Natural killer cell (primary cell): ENCODE measurements at regions of chr5 and their contacts with region 1.

Region 1: DNA sequence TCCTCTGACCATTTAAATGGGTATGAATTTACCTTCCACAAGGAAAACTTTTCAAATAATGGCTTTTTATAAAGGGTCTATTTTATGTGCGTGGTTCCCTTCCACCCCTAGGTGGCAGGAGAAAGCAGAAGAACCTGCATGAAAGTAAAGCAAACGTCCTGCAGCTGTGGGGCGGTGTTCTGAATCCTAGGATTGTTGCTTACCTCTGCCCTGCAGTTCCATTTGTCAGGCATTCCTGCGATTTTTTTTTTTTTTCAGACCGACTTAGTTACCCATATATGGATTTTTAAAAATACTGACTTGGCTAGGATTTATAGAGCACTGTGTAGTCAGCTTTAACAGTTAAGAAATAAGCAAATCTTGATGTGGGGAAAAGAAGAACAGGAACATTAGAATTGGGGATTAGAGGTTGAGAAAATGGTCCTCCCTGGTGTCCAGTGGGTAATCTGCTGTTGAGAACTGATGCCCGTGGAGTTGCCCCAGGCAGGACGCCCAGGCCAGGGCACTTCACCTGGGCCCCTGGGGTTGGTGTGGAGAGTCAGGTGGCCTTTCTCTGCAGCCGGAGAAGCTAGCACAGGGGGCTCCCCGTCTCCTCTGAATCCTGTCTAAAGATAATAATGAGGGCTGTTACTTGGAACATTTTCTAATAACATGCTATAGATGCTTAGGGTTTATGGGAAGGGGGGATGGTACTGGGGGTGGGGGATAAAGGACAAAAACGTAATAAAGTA is 30.4 kb upstream of the LTC4S start:
- DNase-seq: peak; percentile 24 to 80
- ATAC-seq: peak; percentile 72 to 92 (median 84)
- H3K4me3 ChIP-seq: no peak overlapping the region
- H3K4me3 Mint-ChIP-seq: no peak overlapping the region
- H3K27ac ChIP-seq: no peak overlapping the region
- H3K27ac Mint-ChIP-seq: no peak overlapping the region
- H3K4me1 ChIP-seq: peaks cover 31% of the 10 kb centered on the region
- H3K4me1 Mint-ChIP-seq: peaks cover 41 to 55% of the 10 kb centered on the region in 2 donors
- H3K27me3 ChIP-seq: no peaks in the 10 kb centered on the region
- H3K27me3 Mint-ChIP-seq: no peaks in the 10 kb centered on the region
- CTCF ChIP-seq: peak; percentile 84

Region 2: GRCh38 chr5:179795863-179796833 is 32.8 kb after region 1 on chr5:
- intact Hi-C with region 1: loop called (anchors 2 kb)
- DNase-seq: peak; percentile 80 to 84
- ATAC-seq: peak; percentile 75 to 87 (median 82)
- H3K4me3 ChIP-seq: peak overlapping the region; percentile 40
- H3K4me3 Mint-ChIP-seq: peak overlapping the region; percentile 75
- H3K27ac ChIP-seq: peak overlapping the region; percentile 58
- H3K27ac Mint-ChIP-seq: peak overlapping the region; percentile 23 to 56
- H3K4me1 ChIP-seq: peaks cover 44% of the 10 kb centered on the region
- H3K4me1 Mint-ChIP-seq: peaks cover 22 to 38% of the 10 kb centered on the region in 2 donors
- H3K27me3 ChIP-seq: no peaks in the 10 kb centered on the region
- H3K27me3 Mint-ChIP-seq: no peaks in the 10 kb centered on the region
- CTCF ChIP-seq: peak; percentile 73

Region 3: GRCh38 chr5:179907570-179908324 is 144.4 kb after region 1 on chr5 and contains the start of gene TBC1D9B:
- intact Hi-C with region 1: loop called (anchors 2 kb)
- DNase-seq: peak; percentile 68 to 91
- ATAC-seq: peak; percentile 90 to 96 (median 92)
- H3K4me3 ChIP-seq: peak within 1 kb of the TSS; percentile 55
- H3K4me3 Mint-ChIP-seq: peak within 1 kb of the TSS; percentile 88
- H3K27ac ChIP-seq: no peak within 1 kb of the TSS
- H3K27ac Mint-ChIP-seq: peak within 1 kb of the TSS; percentile 68 to 78
- H3K4me1 ChIP-seq: peaks cover 23% of the 10 kb centered on the region
- H3K4me1 Mint-ChIP-seq: peaks cover 10 to 27% of the 10 kb centered on the region in 2 donors
- H3K27me3 ChIP-seq: no peaks in the 10 kb centered on the region
- H3K27me3 Mint-ChIP-seq: no peaks in the 10 kb centered on the region
- CTCF ChIP-seq: peak; percentile 11
- total RNA-seq, gene TBC1D9B: 102 to 115 (median 113) TPM

Region 4: DNA sequence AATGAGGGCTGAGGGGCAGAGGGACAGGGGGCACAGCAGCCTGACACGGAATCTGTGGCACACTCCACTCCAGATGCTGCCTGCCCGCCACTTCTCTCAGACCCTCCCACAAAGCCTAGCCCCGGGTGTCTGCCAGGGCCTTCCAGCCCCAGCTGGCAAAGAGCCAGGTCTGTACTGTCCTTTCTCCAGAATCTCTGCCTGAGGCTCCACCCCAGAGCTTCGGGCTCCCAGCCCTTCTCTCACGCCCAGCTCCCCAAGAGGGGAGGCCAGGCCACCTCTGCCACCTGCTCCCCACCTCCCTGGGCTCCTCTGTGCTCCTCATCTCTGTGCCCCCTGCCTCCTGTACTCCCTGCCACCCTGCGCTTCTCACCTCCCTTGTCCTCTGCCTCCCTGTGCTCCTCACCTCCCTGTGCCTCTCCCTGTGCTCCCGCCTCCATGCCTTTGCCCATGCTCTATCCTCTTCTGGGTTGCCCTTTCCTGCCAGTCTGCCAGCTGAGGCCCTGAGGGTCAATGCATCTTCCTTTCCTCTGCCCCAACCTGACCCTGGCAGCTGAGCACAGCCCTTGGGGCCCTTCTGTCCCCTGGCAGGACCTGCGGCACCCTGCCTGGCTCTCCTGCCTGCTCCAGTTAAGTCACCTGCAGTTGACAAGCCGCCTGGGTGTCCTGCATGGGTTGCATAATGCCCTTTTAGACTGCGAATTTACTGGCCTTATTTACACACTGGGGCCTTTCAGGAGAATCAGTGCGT is 409.2 kb after region 1 on chr5:
- intact Hi-C with region 1: no loop called
- DNase-seq: no peak
- ATAC-seq: no peak
- H3K4me3 ChIP-seq: no peak overlapping the region
- H3K4me3 Mint-ChIP-seq: no peak overlapping the region
- H3K27ac ChIP-seq: no peak overlapping the region
- H3K27ac Mint-ChIP-seq: no peak overlapping the region
- H3K4me1 ChIP-seq: no peaks in the 10 kb centered on the region
- H3K4me1 Mint-ChIP-seq: no peaks in the 10 kb centered on the region
- H3K27me3 ChIP-seq: no peaks in the 10 kb centered on the region
- H3K27me3 Mint-ChIP-seq: no peaks in the 10 kb centered on the region
- CTCF ChIP-seq: no peak